Activated CD4-positive, alpha-beta T cell treated with anti-CD3 and anti-CD28 coated beads for 36 hours (primary cell): ENCODE measurements at regions of chr2 and their contacts with region 1.

Region 1: DNA sequence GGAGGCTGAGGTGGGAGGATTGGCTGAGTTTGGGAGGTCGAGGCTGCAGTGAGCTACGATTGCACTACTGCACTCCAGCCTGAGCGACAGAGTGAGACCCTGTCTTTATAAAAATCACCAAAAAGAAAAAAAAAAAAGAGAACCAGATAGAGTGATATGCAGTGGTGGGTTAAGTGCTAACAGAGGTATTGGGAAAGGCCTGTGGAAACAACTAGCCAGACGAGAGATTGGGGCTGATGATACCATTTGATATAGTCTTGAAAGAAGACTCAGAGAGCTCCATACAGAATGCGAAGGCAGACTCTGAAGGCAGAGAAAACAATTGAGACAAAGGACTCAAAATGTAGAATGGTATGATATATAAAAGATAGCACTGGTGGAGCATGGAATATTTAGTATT is 134.1 kb downstream of the CDC42EP3 start:
- DNase-seq: no peak
- ATAC-seq: no peak
- H3K4me3 Mint-ChIP-seq: no peak overlapping the region
- H3K27ac Mint-ChIP-seq: no peak overlapping the region
- H3K4me1 Mint-ChIP-seq: peaks cover 2% of the 10 kb centered on the region
- H3K27me3 Mint-ChIP-seq: no peaks in the 10 kb centered on the region

Region 2: DNA sequence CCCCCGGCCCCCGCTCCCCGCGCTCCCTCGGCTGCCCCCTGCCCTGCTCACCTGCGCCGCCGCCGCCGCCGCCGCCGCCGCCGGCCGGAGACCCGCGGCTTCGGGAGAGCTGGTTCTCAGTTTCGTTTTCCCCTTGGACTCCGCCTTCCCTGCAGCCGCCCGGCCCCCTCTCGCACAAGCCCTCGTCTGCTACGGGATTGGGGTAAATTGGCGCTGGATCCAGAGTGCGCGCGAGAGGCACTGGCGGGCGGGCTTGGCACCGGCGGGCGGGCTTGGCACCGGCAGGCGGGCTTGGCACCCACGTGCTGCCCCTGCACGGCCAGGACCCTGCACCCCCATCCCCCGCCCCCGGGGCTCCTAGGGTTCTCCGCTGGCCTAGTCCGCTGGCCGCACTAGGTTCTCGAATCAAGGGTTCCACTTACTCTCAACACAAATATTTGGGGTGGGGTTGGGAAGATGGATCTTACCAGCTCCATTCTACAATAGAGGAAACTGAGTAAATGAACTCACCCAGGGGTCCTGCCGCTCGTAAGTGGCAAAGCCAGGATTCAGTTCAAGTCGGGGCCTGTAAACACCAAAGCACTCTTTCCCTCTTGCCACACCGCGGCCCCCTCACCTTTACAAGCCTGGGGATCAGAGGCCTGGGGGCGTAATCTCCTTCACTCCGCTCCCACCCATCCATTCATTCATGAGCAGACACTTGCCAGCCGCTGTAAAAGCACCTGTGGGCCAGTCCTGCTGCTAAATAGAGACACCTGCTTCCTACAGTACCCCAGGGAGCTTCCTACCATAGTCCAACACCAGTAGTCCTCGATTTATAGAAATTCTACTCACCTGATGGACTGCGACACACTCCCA is 380.2 kb before region 1 on chr2 and contains the start of gene EIF2AK2:
- CTCF ChIA-PET with region 1: no interaction called
- POLR2A ChIA-PET with region 1: no interaction called
- intact Hi-C with region 1: no loop called
- DNase-seq: peak; percentile 89
- ATAC-seq: peak; percentile 93
- H3K4me3 Mint-ChIP-seq: peak within 1 kb of the TSS; percentile 85
- H3K27ac Mint-ChIP-seq: peak within 1 kb of the TSS; percentile 89
- H3K4me1 Mint-ChIP-seq: peaks cover 40% of the 10 kb centered on the region
- H3K27me3 Mint-ChIP-seq: no peaks in the 10 kb centered on the region
- total RNA-seq, gene EIF2AK2: 66.4 to 70.6 TPM

Region 3: DNA sequence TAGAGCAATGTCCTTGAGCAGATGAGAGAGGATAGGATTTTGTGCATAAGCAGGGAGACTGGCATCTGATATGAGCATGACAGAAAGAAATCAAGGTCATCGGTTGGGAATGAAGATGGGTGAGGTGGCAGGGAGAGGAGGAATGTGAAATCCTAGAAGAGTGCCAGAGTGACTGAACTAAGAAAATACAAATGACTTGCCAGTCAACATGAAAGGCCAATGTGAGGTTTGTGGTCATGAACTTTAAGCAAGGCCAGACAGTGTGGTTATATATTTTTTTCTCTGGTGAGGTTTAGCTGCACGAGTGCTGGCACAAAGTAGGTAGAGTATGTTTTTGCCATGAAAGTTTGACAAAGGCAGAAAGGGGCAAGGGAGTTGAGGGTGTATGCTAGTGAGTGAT is 171.6 kb before region 1 on chr2:
- CTCF ChIA-PET with region 1: no interaction called
- POLR2A ChIA-PET with region 1: no interaction called
- intact Hi-C with region 1: no loop called
- DNase-seq: peak; percentile 28
- ATAC-seq: peak; percentile 66
- H3K4me3 Mint-ChIP-seq: no peak overlapping the region
- H3K27ac Mint-ChIP-seq: no peak overlapping the region
- H3K4me1 Mint-ChIP-seq: no peaks in the 10 kb centered on the region
- H3K27me3 Mint-ChIP-seq: peaks cover 33% of the 10 kb centered on the region

Region 4: DNA sequence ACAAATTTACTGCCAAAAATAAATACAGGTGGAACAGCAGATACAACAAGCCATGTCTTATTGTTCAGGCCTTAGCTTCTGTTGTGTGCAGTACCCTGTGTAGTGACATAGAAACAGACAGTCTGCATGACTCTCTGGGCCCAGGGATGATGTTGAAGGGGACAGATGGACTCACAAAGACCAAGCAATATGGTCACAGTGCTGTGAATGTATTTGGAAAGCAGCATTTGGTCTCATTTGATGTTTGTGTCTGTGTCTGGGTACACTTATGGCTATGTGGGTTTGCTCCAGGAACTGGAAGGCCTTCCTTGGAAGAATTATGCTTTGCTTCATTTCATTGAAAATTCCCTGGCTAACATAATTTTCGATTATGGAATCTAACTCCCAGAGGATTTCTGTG is 24.3 kb before region 1 on chr2:
- CTCF ChIA-PET with region 1: no interaction called
- POLR2A ChIA-PET with region 1: no interaction called
- intact Hi-C with region 1: no loop called
- DNase-seq: no peak
- ATAC-seq: no peak
- H3K4me3 Mint-ChIP-seq: no peak overlapping the region
- H3K27ac Mint-ChIP-seq: no peak overlapping the region
- H3K4me1 Mint-ChIP-seq: no peaks in the 10 kb centered on the region
- H3K27me3 Mint-ChIP-seq: no peaks in the 10 kb centered on the region

Region 5: DNA sequence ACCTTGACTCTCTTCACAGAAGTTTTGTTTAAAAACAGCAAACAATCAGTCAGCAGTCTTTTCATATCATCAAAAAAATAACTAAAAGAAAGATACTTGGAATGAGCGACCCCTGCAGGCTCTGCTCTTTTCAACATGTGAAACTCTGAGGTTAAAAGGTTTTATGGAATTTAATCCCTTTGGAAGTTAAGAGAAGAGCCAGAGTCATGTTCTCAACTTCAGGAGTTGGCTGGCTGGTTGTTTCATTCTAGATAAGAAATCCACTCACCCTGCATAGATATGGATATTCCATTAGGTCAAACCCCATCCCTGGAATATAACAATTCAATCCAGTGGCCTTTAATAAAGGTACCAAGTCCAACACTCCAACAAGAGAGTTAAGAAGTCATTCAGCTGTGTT is 272.2 kb after region 1 on chr2:
- CTCF ChIA-PET with region 1: interaction called, 3 read pairs
- POLR2A ChIA-PET with region 1: no interaction called
- intact Hi-C with region 1: loop called in 1 of 2 experiments (anchors 5 kb)
- DNase-seq: peak; percentile 23
- ATAC-seq: no peak
- H3K4me3 Mint-ChIP-seq: no peak overlapping the region
- H3K27ac Mint-ChIP-seq: no peak overlapping the region
- H3K4me1 Mint-ChIP-seq: peaks cover 3% of the 10 kb centered on the region
- H3K27me3 Mint-ChIP-seq: peaks cover 5% of the 10 kb centered on the region